ENCODE measurements at regions of chr20 and their contacts with region 1.

Region 1: GRCh38 chr20:20017001-20017843 is at the start of gene NAA20:
- DNase-seq: peak; percentile 89 to 94
- H3K4me3 ChIP-seq: peak within 1 kb of the TSS; percentile 70 to 94 (median 76)
- H3K27ac ChIP-seq: 0 out of 2 replicates have a peak within 1 kb of the TSS, but pooled peaks have one; percentile 53
- H3K4me1 ChIP-seq: peaks cover 0 to 7% (median 2%) of the 10 kb centered on the region in 4 experiments; a peak in 3 of 7 replicates
- H3K27me3 ChIP-seq: no peaks in the 10 kb centered on the region
- CTCF ChIP-seq: peak; percentile 63 to 74 (median 65)
- EP300 ChIP-seq: no peak
- POLR2A ChIP-seq: peak in 1 of 2 experiments; percentile 36; a peak in 1 of 3 replicates
- RAD21 ChIP-seq: peak; percentile 56 to 61
- total RNA-seq, gene NAA20: 39.1 and 41.1 TPM in 2 replicates

Region 2: DNA sequence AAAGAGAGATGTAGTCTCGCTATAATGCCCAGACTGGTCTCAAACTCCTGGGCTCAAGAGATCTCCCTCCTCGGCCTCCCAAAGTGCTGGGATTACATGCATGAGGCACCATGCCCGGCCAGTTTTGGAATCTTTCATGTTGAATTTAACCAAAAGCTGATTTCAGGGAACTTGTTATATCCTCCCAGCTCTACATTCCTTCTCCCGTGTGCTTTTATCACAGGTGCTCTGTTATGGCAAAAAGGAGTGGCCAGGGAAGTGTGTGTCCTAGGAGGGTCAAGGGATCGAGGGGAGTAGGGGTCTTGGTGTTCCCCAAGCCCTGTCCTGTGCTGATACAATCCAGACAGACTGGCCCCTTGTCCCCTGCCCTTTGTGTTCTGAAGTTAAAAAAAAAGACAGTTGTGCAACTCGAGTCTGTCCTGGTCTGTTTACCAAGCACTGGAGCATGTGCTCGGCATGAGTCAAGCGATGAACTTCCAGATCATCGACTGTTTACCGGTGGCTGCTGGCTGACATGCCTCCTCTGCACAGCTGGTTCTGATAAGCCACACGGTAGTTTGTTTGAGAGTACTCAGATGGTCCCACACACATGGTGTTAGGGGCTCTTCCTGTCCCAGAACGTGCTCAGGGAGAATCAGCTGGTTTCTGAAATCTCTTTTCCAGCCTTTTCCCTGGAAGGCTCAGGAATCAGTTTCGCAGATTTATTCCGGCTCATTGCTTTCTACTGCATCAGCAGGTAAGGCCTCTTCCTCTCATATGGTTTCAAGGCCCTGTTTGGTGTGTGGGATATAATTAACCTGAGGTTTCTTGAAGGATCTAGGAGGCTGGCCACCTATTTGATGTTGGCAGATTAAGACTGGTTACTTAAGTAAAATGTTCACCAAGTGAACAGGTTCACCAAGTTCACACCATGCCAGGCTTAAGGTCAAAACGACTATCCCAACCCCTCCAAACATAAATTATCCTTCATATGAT is 52.6 kb before region 1 on chr20:
- CTCF ChIA-PET with region 1: no interaction called
- POLR2A ChIA-PET with region 1: no interaction called
- DNase-seq: no peak
- H3K4me3 ChIP-seq: no peak overlapping the region
- H3K27ac ChIP-seq: no peak overlapping the region
- H3K4me1 ChIP-seq: peaks cover 0 to 14% (median 2%) of the 10 kb centered on the region in 4 experiments; a peak in 4 of 7 replicates
- H3K27me3 ChIP-seq: no peaks in the 10 kb centered on the region
- CTCF ChIP-seq: no peak
- EP300 ChIP-seq: no peak
- POLR2A ChIP-seq: no peak
- RAD21 ChIP-seq: no peak

Region 3: DNA sequence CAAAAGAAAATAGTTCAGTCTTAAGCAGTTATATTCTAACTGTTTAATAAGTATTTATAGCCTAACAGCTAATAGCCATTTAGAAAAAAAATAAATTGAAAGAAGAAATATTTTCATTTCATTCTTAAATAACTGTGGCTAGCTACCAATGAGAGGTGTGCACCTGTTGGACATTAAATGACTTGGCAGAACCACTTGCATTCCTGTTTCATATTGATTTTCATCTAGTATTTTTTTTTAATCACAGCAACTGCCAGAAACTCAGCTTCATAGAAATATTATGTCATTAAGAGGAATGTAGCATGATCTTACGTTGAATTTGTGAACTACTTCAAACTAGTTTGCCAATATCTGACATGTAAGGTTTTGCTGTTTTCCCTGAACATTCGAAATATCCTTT is 10.1 kb after region 1 on chr20:
- CTCF ChIA-PET with region 1: no interaction called
- POLR2A ChIA-PET with region 1: interaction called, 14 read pairs
- DNase-seq: no peak
- H3K4me3 ChIP-seq: no peak overlapping the region
- H3K27ac ChIP-seq: no peak overlapping the region
- H3K4me1 ChIP-seq: no peaks in the 10 kb centered on the region
- H3K27me3 ChIP-seq: no peaks in the 10 kb centered on the region
- CTCF ChIP-seq: no peak
- EP300 ChIP-seq: no peak
- POLR2A ChIP-seq: no peak
- RAD21 ChIP-seq: no peak

Measured in H1 (cell line).